GM10248 (cell line): ENCODE measurements at regions of chr6 and their contacts with region 1.

Region 1: GRCh38 chr6:137707590-137708360 is 159.3 kb upstream of the TNFAIP3 start:
- DNase-seq: peak; percentile 67
- CTCF ChIP-seq: peak; percentile 62

Region 2: GRCh38 chr6:137641474-137642077 is 66.2 kb before region 1 on chr6:
- CTCF ChIA-PET with region 1: no interaction called
- POLR2A ChIA-PET with region 1: no interaction called
- DNase-seq: peak; percentile 57
- CTCF ChIP-seq: peak; percentile 69

Region 3: DNA sequence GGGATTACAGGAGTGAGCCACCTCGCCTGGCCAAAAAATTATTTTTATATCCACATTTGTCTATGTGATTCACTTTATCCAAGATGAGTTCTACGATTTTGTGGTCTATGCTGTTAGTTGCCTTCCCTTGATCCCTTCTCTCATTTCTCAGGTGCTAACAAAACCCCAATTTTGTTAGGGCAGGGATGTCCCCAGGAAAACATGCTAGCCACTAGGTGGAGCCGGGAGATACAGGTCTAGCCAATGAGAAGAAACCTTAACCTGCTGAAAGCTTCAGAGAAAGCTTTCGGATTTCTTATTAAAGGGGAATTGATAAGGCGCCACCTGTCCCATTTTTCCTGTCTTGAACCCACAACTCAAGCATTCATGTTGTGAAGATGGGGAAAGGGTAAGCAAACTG is 46.2 kb before region 1 on chr6:
- CTCF ChIA-PET with region 1: interaction called, 11 read pairs
- POLR2A ChIA-PET with region 1: no interaction called
- DNase-seq: no peak
- CTCF ChIP-seq: peak; percentile 38

Region 4: GRCh38 chr6:137722749-137723272 is 15.0 kb after region 1 on chr6:
- CTCF ChIA-PET with region 1: interaction called, 26 read pairs
- POLR2A ChIA-PET with region 1: no interaction called
- DNase-seq: peak; percentile 31
- CTCF ChIP-seq: no peak

Region 5: DNA sequence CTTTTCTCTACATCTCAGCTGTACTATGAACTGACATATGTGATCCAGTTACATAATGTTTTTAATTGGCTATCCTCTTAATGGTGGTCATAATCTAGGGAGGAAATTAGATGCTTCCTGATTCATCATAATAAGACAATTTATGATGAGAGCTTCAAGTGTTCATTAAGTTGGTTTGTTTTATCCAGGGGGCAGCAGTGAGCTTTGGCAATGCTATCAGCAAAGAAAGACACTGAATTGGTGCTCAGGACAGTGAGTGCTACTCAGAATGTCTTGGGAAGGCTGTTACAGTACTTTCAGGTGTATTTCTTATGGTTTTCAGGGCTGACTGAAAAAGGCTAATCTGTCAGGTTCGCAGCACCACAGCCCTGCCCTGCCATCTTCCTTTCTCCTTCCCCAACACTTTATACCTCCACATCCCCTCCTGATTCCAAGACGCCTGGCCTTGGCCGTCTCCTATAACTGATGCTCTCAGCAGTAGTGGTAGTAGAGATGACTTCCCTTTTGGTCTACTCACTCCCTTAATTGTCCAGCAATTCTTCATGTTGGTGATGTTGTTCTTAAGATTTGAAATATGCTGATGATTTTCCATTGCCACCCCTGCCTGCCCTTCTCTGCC is 92.3 kb after region 1 on chr6:
- CTCF ChIA-PET with region 1: interaction called, 18 read pairs
- POLR2A ChIA-PET with region 1: no interaction called
- DNase-seq: peak; percentile 53
- CTCF ChIP-seq: peak; percentile 60

Region 6: GRCh38 chr6:137873273-137873762 is 165.5 kb after region 1 on chr6:
- CTCF ChIA-PET with region 1: interaction called, 25 read pairs
- POLR2A ChIA-PET with region 1: interaction called, 4 read pairs
- DNase-seq: peak; percentile 54
- CTCF ChIP-seq: no peak

Region 7: DNA sequence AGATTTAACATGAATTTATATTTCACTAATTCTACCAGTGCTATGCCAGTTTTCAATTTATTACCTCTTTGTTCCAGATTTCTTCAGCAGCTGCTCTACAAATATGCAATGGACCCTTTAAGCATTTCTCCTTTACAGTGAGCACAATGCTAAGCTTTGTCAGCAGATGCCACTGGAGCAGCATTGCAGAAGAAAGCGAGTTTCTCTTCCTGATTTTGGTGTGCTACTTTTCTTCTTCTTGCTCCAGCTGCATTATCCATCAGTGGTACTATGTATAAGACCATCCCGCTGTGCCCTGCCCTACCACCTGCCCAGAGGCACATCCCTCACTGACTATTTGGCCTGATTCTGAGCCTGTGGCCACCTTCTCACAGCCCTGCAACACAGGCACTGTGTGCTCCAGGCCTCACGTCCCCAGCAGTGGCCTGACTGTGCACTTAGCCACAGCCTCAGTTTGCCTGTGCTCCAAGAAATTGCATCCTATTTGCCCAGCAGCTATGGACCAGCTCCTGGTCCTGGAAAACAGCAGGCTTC is 243.4 kb after region 1 on chr6:
- CTCF ChIA-PET with region 1: interaction called, 41 read pairs
- POLR2A ChIA-PET with region 1: no interaction called
- DNase-seq: peak; percentile 45
- CTCF ChIP-seq: peak; percentile 60

Region 8: GRCh38 chr6:138007014-138007472 is 299.3 kb after region 1 on chr6:
- CTCF ChIA-PET with region 1: interaction called, 78 read pairs
- POLR2A ChIA-PET with region 1: no interaction called
- DNase-seq: peak; percentile 49
- CTCF ChIP-seq: peak; percentile 45